Caco-2 (cell line): ENCODE measurements at regions of chr6 and their contacts with region 1.

Region 1: DNA sequence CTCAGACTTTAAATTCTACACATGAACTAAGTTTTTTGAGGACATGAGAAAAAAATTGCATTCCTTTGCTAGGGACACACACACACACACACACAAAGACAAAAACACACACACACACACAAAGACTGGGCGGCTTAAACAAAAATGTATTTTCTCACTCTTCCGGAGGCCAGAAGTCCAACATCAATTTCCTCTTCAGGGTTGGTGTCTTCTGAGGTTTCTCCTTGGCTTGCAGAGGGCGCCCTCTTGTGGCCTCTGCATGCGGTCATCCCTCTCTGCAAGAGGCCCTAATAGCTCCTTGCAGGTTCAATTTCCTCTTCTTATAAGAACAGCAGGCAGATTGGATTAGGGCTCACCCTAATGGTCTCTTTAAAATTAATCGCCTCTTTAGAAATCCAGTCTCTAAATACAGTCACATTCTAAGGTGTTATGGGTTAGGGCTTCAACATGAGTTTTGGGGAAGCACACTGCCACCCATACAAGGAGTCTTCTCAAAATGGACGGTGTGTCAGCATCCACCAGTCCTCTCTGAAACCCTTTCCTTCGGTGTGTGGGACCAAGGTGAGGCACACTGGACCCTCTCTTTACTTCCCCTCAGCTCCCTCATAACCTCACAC is 61.4 kb downstream of the GPR6 start:
- DNase-seq: peak; percentile 82 to 86
- H3K4me3 ChIP-seq: peak overlapping the region; percentile 31
- H3K4me3 Mint-ChIP-seq: peak overlapping the region; percentile 79
- H3K27ac Mint-ChIP-seq: peak overlapping the region; percentile 60
- H3K4me1 ChIP-seq: no peaks in the 10 kb centered on the region
- H3K4me1 Mint-ChIP-seq: peaks cover 12% of the 10 kb centered on the region
- H3K27me3 ChIP-seq: no peaks in the 10 kb centered on the region; the same call in 1 of the 2 replicates
- H3K27me3 Mint-ChIP-seq: peaks cover 8% of the 10 kb centered on the region
- CTCF ChIP-seq: peak; percentile 84 to 91

Region 2: DNA sequence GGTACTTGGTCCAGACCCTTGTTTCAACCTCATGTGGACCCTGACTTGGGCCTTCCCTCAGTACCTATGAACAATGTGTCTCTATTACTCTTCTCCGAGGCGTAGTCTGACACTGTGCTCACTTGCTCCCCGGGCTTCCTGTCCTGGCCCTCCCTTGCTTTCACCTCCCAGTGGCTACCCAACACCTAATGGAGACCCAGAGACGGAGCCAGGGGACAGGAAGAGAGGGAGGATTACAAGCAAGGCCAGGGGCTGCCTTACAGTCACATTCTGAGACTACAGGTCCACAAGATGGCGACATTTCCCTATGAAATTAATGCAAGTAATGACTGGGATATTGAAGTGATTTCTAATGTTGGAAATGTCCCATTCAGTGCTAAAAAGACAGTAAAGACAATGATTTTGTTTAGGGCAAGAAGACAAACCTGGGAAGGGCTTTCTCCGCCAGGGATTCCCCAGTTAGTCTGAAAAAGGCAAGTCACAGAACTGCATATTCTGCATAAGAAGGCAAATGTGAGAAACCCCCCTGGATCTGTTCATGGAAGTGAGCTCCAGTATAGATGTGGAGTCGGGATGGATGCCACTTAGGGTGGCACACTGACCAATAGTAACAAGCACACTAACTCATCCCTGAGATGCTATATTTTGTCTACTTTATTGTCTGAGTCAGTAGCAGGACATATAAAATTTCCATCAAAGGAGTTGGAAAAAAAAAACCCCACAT is 512.4 kb before region 1 on chr6:
- CTCF ChIA-PET with region 1: interaction called, 4 read pairs
- POLR2A ChIA-PET with region 1: no interaction called
- intact Hi-C with region 1: loop called (anchors 1 kb)
- DNase-seq: peak; percentile 53 to 67
- H3K4me3 ChIP-seq: no peak overlapping the region
- H3K4me3 Mint-ChIP-seq: no peak overlapping the region
- H3K27ac Mint-ChIP-seq: no peak overlapping the region
- H3K4me1 ChIP-seq: no peaks in the 10 kb centered on the region
- H3K4me1 Mint-ChIP-seq: no peaks in the 10 kb centered on the region
- H3K27me3 ChIP-seq: no peaks in the 10 kb centered on the region
- H3K27me3 Mint-ChIP-seq: peaks cover 4% of the 10 kb centered on the region
- CTCF ChIP-seq: peak; percentile 56 to 65

Region 3: GRCh38 chr6:109713097-109713496 is 326.4 kb before region 1 on chr6:
- CTCF ChIA-PET with region 1: interaction called, 11 read pairs
- POLR2A ChIA-PET with region 1: no interaction called
- intact Hi-C with region 1: no loop called
- DNase-seq: no peak
- H3K4me3 ChIP-seq: no peak overlapping the region
- H3K4me3 Mint-ChIP-seq: no peak overlapping the region
- H3K27ac Mint-ChIP-seq: no peak overlapping the region
- H3K4me1 ChIP-seq: no peaks in the 10 kb centered on the region
- H3K4me1 Mint-ChIP-seq: no peaks in the 10 kb centered on the region
- H3K27me3 ChIP-seq: no peaks in the 10 kb centered on the region
- H3K27me3 Mint-ChIP-seq: no peaks in the 10 kb centered on the region
- CTCF ChIP-seq: no peak

Region 4: GRCh38 chr6:109740787-109741186 is 298.7 kb before region 1 on chr6:
- CTCF ChIA-PET with region 1: no interaction called
- POLR2A ChIA-PET with region 1: no interaction called
- intact Hi-C with region 1: no loop called
- DNase-seq: no peak
- H3K4me3 ChIP-seq: no peak overlapping the region
- H3K4me3 Mint-ChIP-seq: no peak overlapping the region
- H3K27ac Mint-ChIP-seq: no peak overlapping the region
- H3K4me1 ChIP-seq: no peaks in the 10 kb centered on the region
- H3K4me1 Mint-ChIP-seq: no peaks in the 10 kb centered on the region
- H3K27me3 ChIP-seq: no peaks in the 10 kb centered on the region
- H3K27me3 Mint-ChIP-seq: no peaks in the 10 kb centered on the region
- CTCF ChIP-seq: no peak

Region 5: DNA sequence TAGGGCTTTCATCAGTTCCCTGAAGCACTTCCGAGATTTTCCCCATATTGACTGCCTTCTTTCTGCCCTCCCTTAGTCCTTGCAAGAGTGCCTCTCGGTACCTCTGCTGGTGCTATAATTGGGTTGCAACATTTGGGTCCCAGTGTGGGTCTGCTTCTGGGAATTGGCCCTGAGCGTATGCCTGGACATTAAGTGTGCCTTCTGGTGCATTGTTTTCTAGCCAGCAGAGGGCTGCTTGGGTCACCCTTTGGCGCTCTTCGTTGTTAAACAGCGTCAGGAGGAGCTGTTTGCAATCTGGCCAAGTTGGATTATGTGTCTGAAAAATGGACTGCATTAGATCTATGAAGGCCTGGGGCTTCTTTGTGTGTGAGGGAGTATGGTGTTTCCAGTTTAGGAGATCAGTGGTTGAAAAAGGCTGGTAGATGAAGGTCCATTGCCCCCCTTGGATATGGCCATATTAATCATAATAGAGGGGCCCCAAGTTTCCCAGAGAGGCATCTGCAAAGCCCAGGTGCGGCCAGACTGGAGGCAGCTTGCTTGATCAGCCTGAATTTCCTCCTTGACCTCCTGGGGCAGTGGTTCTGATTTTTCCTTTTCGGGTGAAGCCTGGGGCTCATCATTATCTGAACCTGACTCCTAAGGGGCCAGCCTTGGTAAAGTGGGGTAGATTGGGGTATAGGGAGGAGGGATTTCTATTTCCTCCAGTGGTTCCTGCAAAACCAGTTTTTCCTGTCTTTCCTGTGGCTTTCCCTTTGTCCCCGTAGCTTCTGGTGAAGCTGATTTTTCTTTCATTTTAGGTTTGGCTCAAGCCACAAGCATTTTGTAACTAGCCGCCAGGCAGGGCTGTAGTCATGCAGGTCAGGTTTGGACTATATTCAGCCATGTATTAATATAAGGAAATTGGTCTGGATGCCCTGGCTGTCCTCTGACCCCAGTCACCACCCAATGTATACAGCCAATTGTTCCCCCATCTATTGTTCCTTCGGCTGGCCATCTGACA is 146.7 kb before region 1 on chr6:
- CTCF ChIA-PET with region 1: interaction called, 5 read pairs
- POLR2A ChIA-PET with region 1: no interaction called
- intact Hi-C with region 1: loop called (anchors 10 kb)
- DNase-seq: peak in 1 of 2 experiments; percentile 31
- H3K4me3 ChIP-seq: no peak overlapping the region
- H3K4me3 Mint-ChIP-seq: peak overlapping the region; percentile 46
- H3K27ac Mint-ChIP-seq: no peak overlapping the region
- H3K4me1 ChIP-seq: peaks cover 8% of the 10 kb centered on the region; the same call in 1 of the 2 replicates
- H3K4me1 Mint-ChIP-seq: peaks cover 13% of the 10 kb centered on the region
- H3K27me3 ChIP-seq: no peaks in the 10 kb centered on the region
- H3K27me3 Mint-ChIP-seq: peaks cover 1% of the 10 kb centered on the region
- CTCF ChIP-seq: no peak

Region 6: GRCh38 chr6:109961666-109962065 is 77.8 kb before region 1 on chr6:
- CTCF ChIA-PET with region 1: interaction called, 11 read pairs
- POLR2A ChIA-PET with region 1: no interaction called
- intact Hi-C with region 1: no loop called
- DNase-seq: no peak
- H3K4me3 ChIP-seq: no peak overlapping the region
- H3K4me3 Mint-ChIP-seq: no peak overlapping the region
- H3K27ac Mint-ChIP-seq: no peak overlapping the region
- H3K4me1 ChIP-seq: no peaks in the 10 kb centered on the region
- H3K4me1 Mint-ChIP-seq: no peaks in the 10 kb centered on the region
- H3K27me3 ChIP-seq: no peaks in the 10 kb centered on the region
- H3K27me3 Mint-ChIP-seq: peaks cover 5% of the 10 kb centered on the region
- CTCF ChIP-seq: no peak

Region 7: GRCh38 chr6:110053395-110054240 is 14.1 kb after region 1 on chr6:
- CTCF ChIA-PET with region 1: interaction called, 11 read pairs
- POLR2A ChIA-PET with region 1: no interaction called
- intact Hi-C with region 1: loop called (anchors 1 kb)
- DNase-seq: peak in 1 of 2 experiments; percentile 57
- H3K4me3 ChIP-seq: no peak overlapping the region
- H3K4me3 Mint-ChIP-seq: no peak overlapping the region
- H3K27ac Mint-ChIP-seq: no peak overlapping the region
- H3K4me1 ChIP-seq: no peaks in the 10 kb centered on the region
- H3K4me1 Mint-ChIP-seq: no peaks in the 10 kb centered on the region
- H3K27me3 ChIP-seq: no peaks in the 10 kb centered on the region; the same call in 1 of the 2 replicates
- H3K27me3 Mint-ChIP-seq: peaks cover 10% of the 10 kb centered on the region
- CTCF ChIP-seq: peak; percentile 67 to 68

Region 8: GRCh38 chr6:110116258-110116657 is 76.8 kb after region 1 on chr6:
- CTCF ChIA-PET with region 1: no interaction called
- POLR2A ChIA-PET with region 1: no interaction called
- intact Hi-C with region 1: no loop called
- DNase-seq: no peak
- H3K4me3 ChIP-seq: no peak overlapping the region
- H3K4me3 Mint-ChIP-seq: no peak overlapping the region
- H3K27ac Mint-ChIP-seq: no peak overlapping the region
- H3K4me1 ChIP-seq: no peaks in the 10 kb centered on the region
- H3K4me1 Mint-ChIP-seq: peaks cover 6% of the 10 kb centered on the region
- H3K27me3 ChIP-seq: no peaks in the 10 kb centered on the region
- H3K27me3 Mint-ChIP-seq: no peaks in the 10 kb centered on the region
- CTCF ChIP-seq: no peak